ENCODE measurements at regions of chr19 and their contacts with region 1.

Region 1: DNA sequence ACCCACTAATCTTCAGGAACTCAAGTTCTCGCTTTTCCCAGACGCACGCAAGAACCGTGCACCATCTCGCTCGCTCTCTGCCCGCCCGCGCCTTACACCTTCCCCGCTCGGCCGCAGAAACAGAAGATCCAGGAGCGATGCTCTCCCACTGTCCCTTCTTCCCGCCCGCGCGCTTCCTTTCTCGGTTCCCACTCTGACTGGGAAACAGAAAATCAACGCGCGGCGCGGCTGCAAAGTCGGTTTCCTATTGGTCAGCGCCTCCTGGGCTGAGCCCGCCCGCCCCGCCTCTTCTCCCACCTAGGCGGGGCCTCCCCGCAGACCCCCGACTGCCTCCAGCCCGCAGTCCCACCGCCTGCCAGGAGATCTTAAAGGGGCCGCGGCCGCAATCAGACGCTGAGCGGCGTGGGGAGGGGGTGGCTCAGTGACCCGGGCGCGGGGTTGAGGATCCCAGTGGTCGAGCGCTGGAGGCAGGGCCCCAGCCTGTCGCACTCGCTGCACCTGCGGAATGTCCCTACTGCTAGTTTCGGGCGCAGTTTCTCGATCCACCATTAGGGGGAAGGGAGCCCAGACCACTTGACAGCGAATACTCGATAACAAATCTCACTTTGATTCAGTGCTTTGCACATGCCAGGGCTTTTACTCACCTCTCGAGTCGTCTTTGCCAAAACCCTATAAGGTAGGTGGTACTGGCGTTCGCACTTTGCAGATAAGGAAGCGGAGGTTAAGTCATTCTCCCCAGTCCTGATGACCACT is 685 bp upstream of the SLC25A23 start:
- DNase-seq: peak; percentile 95
- H3K4me3 Mint-ChIP-seq: peak overlapping the region; percentile 89
- H3K27ac Mint-ChIP-seq: peak overlapping the region; percentile 84
- H3K4me1 Mint-ChIP-seq: peaks cover 21% of the 10 kb centered on the region
- H3K27me3 Mint-ChIP-seq: peaks cover 4% of the 10 kb centered on the region

Region 2: DNA sequence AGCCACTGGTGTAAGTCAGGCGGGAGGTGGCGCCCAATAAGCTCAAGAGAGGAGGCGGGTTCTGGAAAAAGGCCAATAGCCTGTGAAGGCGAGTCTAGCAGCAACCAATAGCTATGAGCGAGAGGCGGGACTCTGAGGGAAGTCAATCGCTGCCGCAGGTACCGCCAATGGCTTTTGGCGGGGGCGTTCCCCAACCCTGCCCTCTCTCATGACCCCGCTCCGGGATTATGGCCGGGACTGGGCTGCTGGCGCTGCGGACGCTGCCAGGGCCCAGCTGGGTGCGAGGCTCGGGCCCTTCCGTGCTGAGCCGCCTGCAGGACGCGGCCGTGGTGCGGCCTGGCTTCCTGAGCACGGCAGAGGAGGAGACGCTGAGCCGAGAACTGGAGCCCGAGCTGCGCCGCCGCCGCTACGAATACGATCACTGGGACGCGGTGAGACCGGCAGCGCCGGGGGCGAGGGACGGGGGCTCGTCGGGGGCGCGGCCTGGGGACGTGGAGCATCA is 87.6 kb before region 1 on chr19 and contains the start of gene ALKBH7:
- intact Hi-C with region 1: loop called (anchors 1 kb)
- DNase-seq: peak; percentile 95
- H3K4me3 Mint-ChIP-seq: peak within 1 kb of the TSS; percentile 81
- H3K27ac Mint-ChIP-seq: peak within 1 kb of the TSS; percentile 81
- H3K4me1 Mint-ChIP-seq: peaks cover 11% of the 10 kb centered on the region
- H3K27me3 Mint-ChIP-seq: no peaks in the 10 kb centered on the region
- total RNA-seq, gene ALKBH7: 24.8 and 27.1 TPM in 2 replicates

Region 3: DNA sequence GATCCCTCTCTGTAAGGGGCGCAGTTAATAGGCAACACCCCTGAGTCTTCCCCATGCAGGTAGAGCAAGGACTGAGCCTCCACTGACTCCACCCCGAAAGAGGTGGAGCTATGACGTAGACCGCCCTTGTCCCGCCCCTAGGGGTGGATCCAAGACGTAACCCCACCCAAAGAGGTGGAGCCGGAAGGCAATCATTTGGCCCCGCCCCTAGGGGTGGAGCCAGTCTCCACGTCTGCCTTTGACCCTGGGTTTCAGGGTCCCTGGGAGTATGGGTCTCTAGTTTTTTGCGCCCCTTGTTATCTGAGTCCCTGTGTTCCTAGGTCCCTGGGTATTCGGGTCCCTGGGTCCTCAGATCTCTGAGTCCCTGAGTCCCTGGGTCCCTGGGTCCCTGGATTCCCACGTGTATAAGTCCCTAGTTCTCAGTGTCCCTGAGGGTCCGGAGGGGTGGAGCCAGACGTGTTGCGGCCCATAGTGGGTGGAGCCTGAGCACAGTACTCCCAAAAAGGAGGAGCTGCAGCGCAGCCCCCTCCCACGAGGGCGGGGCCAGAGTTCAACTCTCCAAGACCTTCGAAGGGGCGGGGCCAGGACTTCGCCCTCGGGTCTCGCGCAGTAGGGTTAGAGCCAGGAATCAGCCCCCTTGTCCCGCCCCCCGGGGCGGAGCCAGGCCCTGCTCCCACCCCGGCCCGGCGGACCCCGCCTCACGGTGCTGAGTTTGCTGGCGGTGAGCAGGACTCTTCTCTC is 16.0 kb after region 1 on chr19:
- intact Hi-C with region 1: loop called (anchors 1 kb)
- DNase-seq: peak; percentile 50
- H3K4me3 Mint-ChIP-seq: no peak overlapping the region
- H3K27ac Mint-ChIP-seq: no peak overlapping the region
- H3K4me1 Mint-ChIP-seq: peaks cover 14% of the 10 kb centered on the region
- H3K27me3 Mint-ChIP-seq: no peaks in the 10 kb centered on the region

Region 4: DNA sequence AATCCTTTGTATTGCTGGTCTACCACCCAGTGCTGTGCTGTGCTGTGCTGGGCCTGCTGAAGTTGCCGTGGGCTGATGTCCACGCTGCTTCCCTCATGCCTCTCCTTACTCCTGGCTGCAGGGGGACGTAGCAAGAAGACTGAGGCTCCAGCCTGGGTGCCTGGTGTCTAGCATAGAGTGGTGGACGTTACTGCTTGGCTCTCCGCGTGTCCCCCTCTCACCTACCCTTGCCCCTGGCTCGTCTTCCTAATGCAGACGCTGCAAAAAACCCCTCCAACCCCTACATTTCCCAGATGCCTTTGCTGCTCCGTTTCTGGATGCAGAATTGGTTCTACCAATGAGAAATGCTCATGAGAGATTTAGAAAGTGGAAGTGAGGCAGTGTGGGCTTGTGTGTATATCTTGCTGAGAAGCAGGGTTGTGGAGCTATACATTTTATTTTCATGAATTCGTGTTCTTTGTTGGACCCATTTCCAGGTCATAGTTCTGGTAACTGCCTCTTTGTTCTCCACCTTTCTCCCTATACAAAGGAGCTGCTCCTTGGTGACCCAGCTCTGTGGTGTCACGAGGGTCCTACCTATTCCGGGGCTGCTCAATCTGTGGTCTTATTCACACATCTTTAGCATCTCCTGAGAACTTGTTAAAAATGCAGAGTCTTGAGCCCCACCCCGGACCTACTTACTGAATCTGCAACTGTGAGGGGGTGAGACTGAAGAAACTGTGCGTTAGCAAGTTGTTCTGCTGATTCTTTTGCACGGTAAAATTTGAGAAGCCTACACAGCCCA is 29.2 kb after region 1 on chr19:
- intact Hi-C with region 1: no loop called
- DNase-seq: no peak
- H3K4me3 Mint-ChIP-seq: peak overlapping the region; percentile 63
- H3K27ac Mint-ChIP-seq: peak overlapping the region; percentile 19
- H3K4me1 Mint-ChIP-seq: peaks cover 19% of the 10 kb centered on the region
- H3K27me3 Mint-ChIP-seq: peaks cover 1% of the 10 kb centered on the region

Region 5: DNA sequence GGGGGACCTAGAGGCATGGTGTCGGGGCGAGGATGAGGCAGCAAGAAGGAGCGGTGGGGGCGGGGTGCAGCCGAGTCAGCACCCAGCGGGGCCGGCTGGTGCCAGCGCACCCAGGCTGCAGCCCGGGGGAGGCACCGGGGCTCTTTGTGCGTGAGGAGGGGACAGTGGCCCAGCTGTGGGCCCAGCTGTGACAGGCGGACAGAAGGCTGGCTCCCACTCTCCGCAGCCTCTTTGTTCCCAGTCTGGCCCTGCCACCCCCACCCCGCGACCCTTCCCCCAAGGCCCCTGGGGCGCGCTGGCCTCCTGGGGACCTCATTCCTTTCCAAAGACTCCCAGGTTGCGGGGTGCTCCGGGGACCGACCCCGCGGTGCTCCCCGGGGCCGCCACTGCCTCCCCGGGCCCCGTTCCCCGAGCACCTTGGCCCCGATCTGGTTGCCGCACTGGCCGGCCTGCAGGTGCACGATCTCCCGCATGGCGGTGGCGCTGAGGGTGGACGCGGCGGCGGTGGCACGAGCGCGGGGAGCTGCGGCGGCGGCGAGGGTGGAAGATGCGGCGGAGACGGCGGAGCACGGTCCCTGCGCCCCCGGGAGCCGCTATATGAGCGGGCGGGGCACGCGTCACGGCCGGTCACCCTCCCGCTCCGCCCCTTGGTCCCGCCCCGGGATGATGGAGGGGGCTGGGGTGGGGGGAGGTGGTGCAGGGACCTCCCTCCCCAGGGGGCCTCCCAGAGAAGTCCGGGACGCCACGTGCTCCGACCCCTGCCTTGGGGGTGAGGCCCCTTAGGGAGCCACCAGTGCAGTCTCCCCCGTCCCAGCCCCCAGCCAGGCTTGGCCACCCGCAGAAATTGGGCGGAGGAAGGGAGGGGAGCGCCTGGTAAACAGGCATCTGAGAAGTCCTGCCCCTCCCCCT is 41.7 kb after region 1 on chr19 and contains the start of gene TUBB4A:
- intact Hi-C with region 1: loop called (anchors 1 kb)
- DNase-seq: peak; percentile 31
- H3K4me3 Mint-ChIP-seq: peak within 1 kb of the TSS; percentile 82
- H3K27ac Mint-ChIP-seq: no peak within 1 kb of the TSS
- H3K4me1 Mint-ChIP-seq: peaks cover 21% of the 10 kb centered on the region
- H3K27me3 Mint-ChIP-seq: peaks cover 18% of the 10 kb centered on the region
- total RNA-seq, gene TUBB4A: 2.3 and 3.0 TPM in 2 replicates

Region 6: GRCh38 chr19:6773323-6773931 is 313.1 kb after region 1 on chr19:
- intact Hi-C with region 1: loop called (anchors 1 kb)
- DNase-seq: peak; percentile 34
- H3K4me3 Mint-ChIP-seq: peak overlapping the region; percentile 92
- H3K27ac Mint-ChIP-seq: peak overlapping the region; percentile 93
- H3K4me1 Mint-ChIP-seq: peaks cover 62% of the 10 kb centered on the region
- H3K27me3 Mint-ChIP-seq: no peaks in the 10 kb centered on the region

Measured in activated T-helper 1 cell treated with anti-CD3 and anti-CD28 coated beads, Interleukin-12 subunit alpha, Interleukin-12 subunit beta, Interleukin-2, Interleukin-4 antibody, amounts not matched to agents 30 ng/mL and 10 ng/mL and 1 ng/mL, durations not matched to agents 14 hours and 24 hours and 36 hours (primary cell).